ENCODE measurements at regions of chr15 and their contacts with region 1.

Region 1: GRCh38 chr15:88913017-88913849 is at the start of gene MFGE8:
- H3K4me3 ChIP-seq: peak within 1 kb of the TSS; percentile 71
- H3K27ac ChIP-seq: peak within 1 kb of the TSS; percentile 83
- H3K4me1 ChIP-seq: peaks cover 2% of the 10 kb centered on the region; the same call in 1 of the 2 replicates
- CTCF ChIP-seq: peak; percentile 71

Region 2: DNA sequence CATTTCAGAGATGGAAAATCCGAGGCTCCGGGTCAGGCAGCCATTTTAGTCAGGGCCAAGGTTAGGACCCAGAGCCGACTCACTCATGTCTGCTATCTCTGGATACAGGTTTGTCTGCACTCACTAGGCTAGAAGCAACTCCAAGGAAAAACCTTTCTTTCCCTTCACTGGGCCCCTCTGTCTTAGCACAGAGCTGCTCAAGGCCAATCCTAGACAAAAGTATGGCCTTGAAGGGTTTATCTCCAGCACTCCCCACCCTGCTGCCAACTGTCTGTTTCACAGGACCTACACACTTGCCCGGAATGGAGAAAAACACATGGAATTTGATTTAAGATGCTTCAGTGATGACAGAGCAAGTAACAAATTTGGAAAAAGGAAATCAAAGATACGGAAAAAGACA is 84.4 kb before region 1 on chr15:
- CTCF ChIA-PET with region 1: no interaction called
- POLR2A ChIA-PET with region 1: no interaction called
- H3K4me3 ChIP-seq: no peak overlapping the region
- H3K27ac ChIP-seq: no peak overlapping the region
- H3K4me1 ChIP-seq: no peaks in the 10 kb centered on the region
- CTCF ChIP-seq: no peak

Region 3: DNA sequence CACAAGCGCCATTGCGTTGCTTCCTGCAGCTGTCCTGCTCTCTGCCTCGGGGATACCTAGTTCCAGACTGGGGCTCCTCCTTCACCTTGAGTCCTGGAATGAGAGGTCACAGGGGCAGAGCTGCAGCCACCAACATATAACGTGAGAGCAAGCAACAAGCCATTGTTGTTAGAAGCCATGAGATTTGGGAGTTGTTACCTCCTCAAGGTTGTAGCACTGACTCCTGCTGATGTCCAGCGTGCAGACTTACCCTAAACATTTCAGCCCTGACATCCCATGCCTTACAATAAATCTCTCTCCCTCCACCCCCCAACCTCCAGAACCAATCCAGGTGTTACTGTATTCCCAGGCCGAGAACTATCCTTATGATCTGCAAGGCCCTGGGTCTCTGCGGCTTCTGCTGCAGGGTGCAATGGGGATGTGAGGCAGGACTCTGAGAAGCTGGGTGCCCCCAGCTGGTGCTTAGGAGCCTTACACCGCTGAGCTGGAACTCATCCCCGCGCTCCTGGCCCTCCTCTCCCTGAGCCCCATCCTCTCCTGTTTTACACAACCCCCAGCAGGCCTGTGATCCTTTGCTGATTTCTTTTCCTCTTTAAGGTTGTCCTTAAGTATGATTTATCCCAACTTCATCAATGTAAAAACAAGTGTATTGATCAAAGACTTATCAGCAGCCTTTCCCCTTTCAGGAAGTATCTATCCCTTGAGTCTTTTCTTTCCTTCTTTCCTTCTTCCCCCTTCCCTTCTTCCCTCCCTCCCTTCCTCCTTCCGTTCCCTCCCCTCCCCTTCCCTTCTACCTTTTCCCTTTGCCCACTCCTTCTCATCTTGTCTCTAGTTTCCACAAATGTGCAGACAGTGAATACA is 90.9 kb after region 1 on chr15:
- CTCF ChIA-PET with region 1: interaction called, 11 read pairs
- POLR2A ChIA-PET with region 1: no interaction called
- H3K4me3 ChIP-seq: no peak overlapping the region
- H3K27ac ChIP-seq: no peak overlapping the region
- H3K4me1 ChIP-seq: no peaks in the 10 kb centered on the region
- CTCF ChIP-seq: peak; percentile 47; the same call in 1 of the 2 replicates